GM10248 (cell line): ENCODE measurements at regions of chr1 and their contacts with region 1.

Region 1: DNA sequence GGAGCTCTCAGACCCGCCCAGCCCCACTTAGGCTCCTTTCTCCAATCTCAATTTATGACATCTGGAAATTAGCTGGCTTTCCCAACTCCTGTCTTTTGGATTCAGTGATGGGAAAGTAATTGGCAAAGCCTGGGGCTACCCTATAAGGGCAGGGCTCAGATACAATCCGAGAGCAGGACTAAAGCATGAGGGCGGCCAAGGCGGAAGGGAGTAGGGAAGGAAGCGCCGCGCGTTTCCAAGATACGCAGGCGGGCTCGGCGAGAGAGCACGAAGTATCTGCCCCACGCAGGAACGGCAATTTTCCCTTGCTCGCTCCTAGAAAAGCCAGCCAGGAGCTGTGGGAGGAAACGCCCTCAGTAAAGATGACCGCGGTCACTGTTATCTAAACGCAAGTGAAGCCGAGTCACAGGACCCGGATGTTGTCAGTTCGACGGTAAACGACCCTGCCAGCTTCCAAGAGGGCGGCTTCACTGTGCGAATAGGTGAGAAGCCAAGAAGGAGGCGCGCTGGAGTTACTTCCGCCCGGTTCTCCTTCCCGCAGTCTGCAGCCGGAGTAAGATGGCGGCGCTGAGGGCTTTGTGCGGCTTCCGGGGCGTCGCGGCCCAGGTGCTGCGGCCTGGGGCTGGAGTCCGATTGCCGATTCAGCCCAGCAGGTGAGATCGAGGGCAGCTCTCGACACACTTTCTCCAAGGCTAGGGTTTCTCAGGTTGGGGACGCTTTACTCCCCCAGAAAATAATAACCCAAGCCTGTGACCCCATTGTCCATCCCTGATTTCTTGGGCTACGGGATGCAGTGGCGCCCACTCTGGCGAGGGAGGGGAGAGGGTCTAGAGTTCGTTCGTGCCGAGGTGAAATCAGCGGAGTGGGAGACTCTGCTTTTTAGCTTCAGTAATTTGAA is at the start of gene NDUFS2:
- DNase-seq: peak; percentile 94
- CTCF ChIP-seq: peak; percentile 10

Region 2: DNA sequence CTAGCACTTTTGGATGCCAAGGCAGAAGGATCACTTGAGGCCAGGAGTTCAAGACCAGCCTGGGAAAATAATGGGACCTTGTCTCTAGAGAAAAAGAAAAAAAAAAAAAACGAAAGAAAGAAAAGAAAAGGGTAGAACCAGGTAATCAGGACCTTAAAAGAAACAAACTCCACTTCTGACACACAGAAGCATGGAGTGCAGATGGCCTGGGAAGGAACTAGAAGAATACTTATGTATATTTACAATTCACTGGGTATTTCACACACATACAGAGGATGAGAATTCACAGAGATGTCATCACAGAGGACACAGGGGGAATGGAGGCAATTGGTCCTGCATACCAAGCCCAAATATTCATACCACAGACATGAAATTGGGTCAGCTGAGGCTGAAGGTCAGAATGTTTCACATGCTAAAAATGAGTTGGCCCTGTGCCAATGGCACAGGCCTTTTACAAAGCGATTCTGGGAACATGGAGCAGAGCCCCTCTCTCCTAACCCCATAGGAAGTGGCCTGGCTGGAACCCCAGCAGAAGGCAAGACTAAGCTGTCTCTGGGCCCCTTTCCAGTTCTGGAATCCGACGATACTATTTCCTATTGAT is 29.2 kb before region 1 on chr1:
- CTCF ChIA-PET with region 1: no interaction called
- POLR2A ChIA-PET with region 1: no interaction called
- DNase-seq: no peak
- CTCF ChIP-seq: no peak

Region 3: GRCh38 chr1:161216945-161217712 is 15.1 kb after region 1 on chr1:
- CTCF ChIA-PET with region 1: interaction called, 13 read pairs
- POLR2A ChIA-PET with region 1: interaction called, 3 read pairs
- DNase-seq: peak; percentile 63
- CTCF ChIP-seq: no peak